ENCODE measurements at regions of chr12 and their contacts with region 1.

Region 1: GRCh38 chr12:56224102-56224701 is at the start of gene NABP2:
- DNase-seq: peak; percentile 97
- H3K4me3 Mint-ChIP-seq: peak within 1 kb of the TSS; percentile 99
- H3K27ac Mint-ChIP-seq: peak within 1 kb of the TSS; percentile 93
- H3K4me1 Mint-ChIP-seq: peaks cover 37% of the 10 kb centered on the region
- H3K27me3 Mint-ChIP-seq: no peaks in the 10 kb centered on the region
- total RNA-seq, gene NABP2: 57.4 to 59.0 TPM

Region 2: DNA sequence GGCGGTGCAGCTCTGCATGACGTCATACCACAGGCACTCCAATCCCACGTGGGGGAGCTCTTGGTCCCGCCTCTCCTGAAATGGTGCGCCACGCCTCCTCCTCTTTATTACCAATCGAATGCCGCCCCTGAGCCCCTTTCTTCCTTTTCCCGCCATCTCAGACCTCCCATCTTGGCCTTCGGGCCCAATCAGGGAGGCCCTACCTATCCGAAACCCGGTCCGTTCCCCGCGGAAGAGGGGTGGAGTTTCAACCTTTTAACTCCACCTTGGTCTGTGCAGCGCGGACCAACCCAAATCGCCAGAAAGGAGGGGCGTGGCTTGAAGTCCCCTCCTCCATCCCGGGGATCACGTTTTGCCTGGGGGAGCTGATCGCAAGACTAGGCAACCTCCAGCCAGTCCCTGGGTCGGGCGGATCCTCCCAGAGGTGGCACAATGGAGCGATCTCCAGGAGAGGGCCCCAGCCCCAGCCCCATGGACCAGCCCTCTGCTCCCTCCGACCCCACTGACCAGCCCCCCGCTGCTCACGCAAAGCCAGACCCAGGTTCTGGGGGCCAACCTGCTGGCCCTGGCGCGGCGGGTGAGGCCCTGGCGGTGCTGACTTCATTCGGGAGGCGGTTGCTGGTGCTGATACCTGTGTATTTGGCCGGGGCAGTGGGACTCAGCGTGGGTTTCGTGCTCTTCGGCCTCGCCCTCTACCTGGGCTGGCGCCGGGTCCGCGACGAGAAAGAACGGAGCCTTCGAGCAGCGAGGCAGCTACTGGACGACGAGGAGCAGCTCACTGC is 96.1 kb before region 1 on chr12 and contains the start of gene ESYT1:
- CTCF ChIA-PET with region 1: interaction called, 18 read pairs
- intact Hi-C with region 1: loop called (anchors 1 kb)
- DNase-seq: peak; percentile 99
- H3K4me3 Mint-ChIP-seq: peak within 1 kb of the TSS; percentile 91
- H3K27ac Mint-ChIP-seq: peak within 1 kb of the TSS; percentile 86
- H3K4me1 Mint-ChIP-seq: peaks cover 55% of the 10 kb centered on the region
- H3K27me3 Mint-ChIP-seq: no peaks in the 10 kb centered on the region
- total RNA-seq, gene ESYT1: 87.4 to 88.9 TPM

Region 3: DNA sequence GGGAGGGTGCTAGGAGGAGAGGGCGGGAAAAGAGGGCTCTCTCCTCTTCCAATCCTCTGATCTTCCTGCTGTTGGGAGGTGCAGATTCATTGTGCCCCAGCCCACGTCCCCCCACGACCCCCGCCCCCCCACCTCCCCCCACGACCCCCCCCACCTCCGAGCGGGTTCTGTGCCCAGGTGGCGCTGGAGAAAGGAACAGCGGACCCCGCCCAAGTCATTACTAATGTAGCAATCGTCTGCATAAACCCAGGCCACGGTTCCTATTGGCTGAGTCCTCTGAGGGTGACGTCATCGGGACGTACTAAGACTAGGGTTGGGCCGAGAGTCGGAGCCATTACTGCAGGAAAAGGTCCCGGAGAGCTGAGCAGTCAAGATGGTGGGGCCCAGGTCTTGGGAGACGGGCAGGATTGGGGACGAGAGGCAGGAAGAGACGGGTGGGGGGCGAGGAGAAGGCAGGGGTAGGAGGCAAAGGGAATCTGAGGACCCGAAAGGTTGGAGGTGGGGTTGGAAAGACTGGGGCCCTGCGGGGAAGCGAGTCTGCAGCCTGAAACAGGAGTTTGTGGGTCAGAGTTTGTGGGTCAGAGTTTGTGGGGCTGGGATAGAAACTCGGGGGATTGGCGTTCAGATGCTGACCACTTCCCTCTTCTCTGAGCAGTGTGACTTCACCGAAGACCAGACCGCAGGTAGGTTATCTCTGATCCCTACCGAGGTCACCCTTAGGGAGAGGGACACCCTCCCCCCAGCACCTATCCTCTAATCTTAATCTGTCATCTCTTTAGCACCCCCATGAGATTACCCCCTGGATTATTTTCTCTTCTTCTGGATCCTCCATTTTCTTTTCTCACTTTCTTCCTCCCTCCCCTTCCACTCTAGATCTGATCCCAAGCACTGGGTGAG is 65.9 kb before region 1 on chr12 and contains the start of gene MYL6:
- CTCF ChIA-PET with region 1: interaction called, 5 read pairs
- intact Hi-C with region 1: loop called (anchors 1 kb)
- DNase-seq: peak; percentile 98
- H3K4me3 Mint-ChIP-seq: peak within 1 kb of the TSS; percentile 96
- H3K27ac Mint-ChIP-seq: peak within 1 kb of the TSS; percentile 95
- H3K4me1 Mint-ChIP-seq: peaks cover 42% of the 10 kb centered on the region
- H3K27me3 Mint-ChIP-seq: no peaks in the 10 kb centered on the region
- total RNA-seq, gene MYL6: 841 to 868 TPM

Region 4: DNA sequence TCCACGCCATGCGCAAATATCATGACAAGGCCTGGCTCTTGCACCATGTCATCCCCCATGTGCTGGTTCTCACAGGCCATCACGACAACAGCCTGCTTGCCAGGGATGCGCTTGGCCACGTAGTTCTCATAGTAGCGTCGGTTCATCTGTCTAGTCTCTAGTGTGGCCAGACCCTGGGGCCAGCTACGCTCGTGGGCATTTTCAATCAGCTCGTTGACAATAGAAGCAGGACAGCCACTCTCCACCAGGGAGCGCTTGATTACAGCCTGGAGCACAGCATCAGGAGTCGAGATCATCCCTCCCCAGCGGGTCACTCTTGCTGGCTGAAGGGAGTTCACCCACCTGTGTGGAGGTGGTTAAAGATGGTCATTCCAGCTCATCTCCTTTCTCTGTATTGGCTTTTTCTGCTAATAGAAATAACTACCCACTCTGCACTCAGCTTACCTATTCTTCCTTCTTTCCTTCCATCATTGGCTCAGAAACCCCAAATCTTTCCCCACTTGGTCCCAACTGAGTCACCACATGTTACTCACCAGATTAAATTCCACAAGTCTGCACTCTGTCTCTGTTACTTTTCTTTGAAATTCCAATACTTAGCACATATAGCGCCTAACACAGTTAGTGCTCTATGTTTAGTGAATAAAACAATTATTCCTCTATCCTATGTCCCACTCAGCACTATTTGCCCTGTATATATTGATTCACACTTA is 17.6 kb before region 1 on chr12:
- CTCF ChIA-PET with region 1: interaction called, 40 read pairs
- intact Hi-C with region 1: loop called (anchors 2 kb)
- DNase-seq: peak; percentile 67
- H3K4me3 Mint-ChIP-seq: no peak overlapping the region
- H3K27ac Mint-ChIP-seq: no peak overlapping the region
- H3K4me1 Mint-ChIP-seq: peaks cover 2% of the 10 kb centered on the region
- H3K27me3 Mint-ChIP-seq: no peaks in the 10 kb centered on the region

Region 5: GRCh38 chr12:56299853-56300643 is 75.8 kb after region 1 on chr12 and contains the start of gene CS:
- CTCF ChIA-PET with region 1: interaction called, 4 read pairs
- intact Hi-C with region 1: loop called (anchors 1 kb)
- DNase-seq: peak; percentile 99
- H3K4me3 Mint-ChIP-seq: peak within 1 kb of the TSS; percentile 91
- H3K27ac Mint-ChIP-seq: peak within 1 kb of the TSS; percentile 92
- H3K4me1 Mint-ChIP-seq: peaks cover 42% of the 10 kb centered on the region
- H3K27me3 Mint-ChIP-seq: no peaks in the 10 kb centered on the region
- total RNA-seq, gene CS: 330 to 336 TPM

Region 6: GRCh38 chr12:56724972-56725722 is 500.9 kb after region 1 on chr12 and contains the start of gene NACA:
- CTCF ChIA-PET with region 1: no interaction called
- intact Hi-C with region 1: loop called (anchors 1 kb)
- DNase-seq: peak; percentile 99
- H3K4me3 Mint-ChIP-seq: peak within 1 kb of the TSS; percentile 99
- H3K27ac Mint-ChIP-seq: peak within 1 kb of the TSS; percentile 99
- H3K4me1 Mint-ChIP-seq: peaks cover 46% of the 10 kb centered on the region
- H3K27me3 Mint-ChIP-seq: no peaks in the 10 kb centered on the region
- total RNA-seq, gene NACA: 1,279 to 1,321 TPM